ENCODE measurements at regions of chr16 and their contacts with region 1.

Region 1: GRCh38 chr16:31873556-31874365 is at the start of gene ZNF267:
- DNase-seq: peak; percentile 93 to 96 (median 94)
- H3K4me3 ChIP-seq: peak within 1 kb of the TSS; percentile 79 to 82
- H3K4me3 Mint-ChIP-seq: peak within 1 kb of the TSS; percentile 94 to 98 (median 96)
- H3K27ac ChIP-seq: peak within 1 kb of the TSS; percentile 97
- H3K27ac Mint-ChIP-seq: peak within 1 kb of the TSS; percentile 87 to 99 (median 98)
- H3K4me1 ChIP-seq: peaks cover 85% of the 10 kb centered on the region
- H3K4me1 Mint-ChIP-seq: peaks cover 60 to 89% (median 70%) of the 10 kb centered on the region in 4 donors
- H3K27me3 ChIP-seq: no peaks in the 10 kb centered on the region
- H3K27me3 Mint-ChIP-seq: no peaks in the 10 kb centered on the region
- total RNA-seq, gene ZNF267: 47.4 to 51.9 TPM

Region 2: GRCh38 chr16:31810863-31811262 is 62.9 kb before region 1 on chr16:
- CTCF ChIA-PET with region 1: no interaction called
- POLR2A ChIA-PET with region 1: no interaction called
- intact Hi-C with region 1: no loop called
- DNase-seq: no peak
- H3K4me3 ChIP-seq: no peak overlapping the region
- H3K4me3 Mint-ChIP-seq: no peak overlapping the region
- H3K27ac ChIP-seq: no peak overlapping the region
- H3K27ac Mint-ChIP-seq: no peak overlapping the region
- H3K4me1 ChIP-seq: no peaks in the 10 kb centered on the region
- H3K4me1 Mint-ChIP-seq: no peaks in the 10 kb centered on the region
- H3K27me3 ChIP-seq: no peaks in the 10 kb centered on the region
- H3K27me3 Mint-ChIP-seq: peaks cover 3 to 16% of the 10 kb centered on the region in 2 donors

Region 3: GRCh38 chr16:31861455-31861854 is 12.3 kb before region 1 on chr16:
- CTCF ChIA-PET with region 1: interaction called, 78 read pairs
- POLR2A ChIA-PET with region 1: interaction called, 20 read pairs
- intact Hi-C with region 1: loop called (anchors 1 kb)
- DNase-seq: peak; percentile 39 to 52 (median 44)
- H3K4me3 ChIP-seq: no peak overlapping the region
- H3K4me3 Mint-ChIP-seq: peak overlapping the region in 7 of 8 donors; percentile 1 to 54 (median 13)
- H3K27ac ChIP-seq: peak overlapping the region; percentile 7
- H3K27ac Mint-ChIP-seq: peak overlapping the region; percentile 43 to 87 (median 75)
- H3K4me1 ChIP-seq: peaks cover 24% of the 10 kb centered on the region
- H3K4me1 Mint-ChIP-seq: peaks cover 24 to 35% (median 30%) of the 10 kb centered on the region in 4 donors
- H3K27me3 ChIP-seq: no peaks in the 10 kb centered on the region
- H3K27me3 Mint-ChIP-seq: no peaks in the 10 kb centered on the region

Measured in CD4-positive, alpha-beta memory T cell (primary cell).